Activated naive CD4-positive, alpha-beta T cell treated with anti-CD3 and anti-CD28 coated beads for 36 hours (primary cell): ENCODE measurements at regions of chr12 and their contacts with region 1.

Region 1: DNA sequence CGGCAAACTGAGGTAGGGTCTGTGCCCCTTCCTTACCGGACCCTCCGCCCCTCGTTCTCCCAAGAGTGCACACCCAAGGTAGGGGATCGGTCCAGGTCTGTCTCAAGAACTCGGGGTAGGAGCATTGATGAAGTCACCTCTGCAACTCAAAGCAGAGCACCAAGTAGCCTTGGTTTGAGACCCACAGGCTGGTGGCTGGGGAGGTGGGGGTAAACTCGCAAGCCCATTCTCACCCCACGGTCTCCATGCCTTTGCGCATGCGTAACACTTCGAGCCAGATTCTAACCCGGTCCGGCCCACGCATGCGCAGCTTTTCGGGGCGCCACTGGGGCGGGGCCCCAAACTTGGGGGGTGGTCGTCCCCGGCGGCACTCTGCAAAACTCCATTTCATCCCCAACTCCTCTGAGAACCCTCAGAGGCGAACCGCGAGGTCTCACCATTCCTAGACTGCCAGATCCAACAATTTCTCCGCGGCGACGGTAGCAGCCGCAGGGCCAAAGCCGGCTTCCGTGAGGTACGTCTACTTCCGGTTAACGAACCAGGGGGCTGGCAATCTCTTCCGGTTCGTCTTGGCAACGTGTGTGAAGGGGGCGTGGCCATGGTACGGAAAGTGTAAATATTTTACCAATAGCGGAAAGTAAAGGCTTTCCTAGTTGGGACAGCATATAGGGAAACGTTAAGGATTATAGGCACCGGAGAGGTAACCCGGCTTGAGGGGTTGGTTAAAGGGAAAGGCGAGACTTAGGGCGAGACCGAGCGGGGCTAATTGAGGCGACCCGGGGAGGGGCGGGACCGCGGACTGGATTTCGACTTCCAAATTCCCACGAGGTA is at the start of gene MCRS1:
- DNase-seq: peak; percentile 91
- H3K4me3 Mint-ChIP-seq: peak within 1 kb of the TSS; percentile 99
- H3K27ac Mint-ChIP-seq: peak within 1 kb of the TSS; percentile 98
- H3K4me1 Mint-ChIP-seq: peaks cover 50% of the 10 kb centered on the region
- H3K27me3 Mint-ChIP-seq: no peaks in the 10 kb centered on the region
- total RNA-seq, gene MCRS1: 49.8 to 52.7 TPM

Region 2: GRCh38 chr12:49553512-49554088 is 14.2 kb before region 1 on chr12:
- CTCF ChIA-PET with region 1: interaction called, 12 read pairs
- intact Hi-C with region 1: no loop called
- DNase-seq: peak; percentile 29
- H3K4me3 Mint-ChIP-seq: no peak overlapping the region
- H3K27ac Mint-ChIP-seq: no peak overlapping the region
- H3K4me1 Mint-ChIP-seq: peaks cover 4% of the 10 kb centered on the region
- H3K27me3 Mint-ChIP-seq: no peaks in the 10 kb centered on the region

Region 3: GRCh38 chr12:49580572-49581535 is 13.0 kb after region 1 on chr12:
- CTCF ChIA-PET with region 1: interaction called, 11 read pairs
- intact Hi-C with region 1: no loop called
- DNase-seq: peak; percentile 69
- H3K4me3 Mint-ChIP-seq: no peak overlapping the region
- H3K27ac Mint-ChIP-seq: no peak overlapping the region
- H3K4me1 Mint-ChIP-seq: peaks cover 16% of the 10 kb centered on the region
- H3K27me3 Mint-ChIP-seq: no peaks in the 10 kb centered on the region

Region 4: DNA sequence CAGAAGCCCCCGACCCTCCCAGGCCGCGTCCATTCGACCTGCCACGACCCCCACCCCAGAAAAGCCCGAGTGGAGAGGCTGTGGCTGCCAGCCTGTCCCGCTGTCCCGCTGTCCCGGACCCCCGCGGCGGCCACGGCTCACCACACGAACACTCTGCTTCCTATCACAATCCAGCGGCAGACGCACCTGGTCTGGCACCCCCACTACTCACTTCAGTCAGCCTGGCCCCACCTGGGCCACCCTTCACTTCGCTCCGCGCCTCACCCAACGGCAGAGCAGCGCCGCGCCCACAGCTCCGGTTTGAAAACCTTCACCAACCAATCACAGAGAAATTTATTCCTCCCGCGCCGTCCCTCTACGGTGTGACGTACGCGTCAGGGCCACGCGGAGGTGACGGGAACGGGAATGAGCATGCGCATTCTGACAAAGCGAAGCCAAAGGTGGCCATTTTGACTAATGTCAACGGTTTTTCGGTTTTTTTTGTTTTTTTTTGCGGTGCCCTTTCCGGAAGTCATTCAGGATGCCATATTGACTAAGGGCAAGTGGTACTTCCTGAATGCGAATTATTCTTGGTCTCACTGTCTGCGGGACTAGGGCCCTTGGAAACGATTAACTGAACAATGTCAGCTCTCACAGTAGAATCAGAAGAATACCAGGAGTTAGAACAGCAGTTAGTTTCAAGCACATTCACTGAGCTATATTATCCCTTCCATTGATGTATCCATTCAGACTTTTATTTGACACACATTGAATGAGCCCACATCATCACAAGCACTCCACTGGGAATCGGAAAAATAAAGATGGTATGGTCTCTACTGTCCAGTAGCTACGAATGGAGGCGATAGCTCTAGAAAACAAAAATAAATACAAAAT is 457.6 kb after region 1 on chr12 and contains the start of gene RACGAP1:
- CTCF ChIA-PET with region 1: no interaction called
- intact Hi-C with region 1: loop called (anchors 5 kb)
- DNase-seq: peak; percentile 98
- H3K4me3 Mint-ChIP-seq: peak within 1 kb of the TSS; percentile 92
- H3K27ac Mint-ChIP-seq: peak within 1 kb of the TSS; percentile 94
- H3K4me1 Mint-ChIP-seq: peaks cover 12% of the 10 kb centered on the region
- H3K27me3 Mint-ChIP-seq: no peaks in the 10 kb centered on the region
- total RNA-seq, gene RACGAP1: 156 to 159 TPM

Region 5: GRCh38 chr12:51505360-51506105 is 1937.7 kb after region 1 on chr12:
- CTCF ChIA-PET with region 1: no interaction called
- intact Hi-C with region 1: no loop called
- DNase-seq: no peak
- H3K4me3 Mint-ChIP-seq: no peak overlapping the region
- H3K27ac Mint-ChIP-seq: no peak overlapping the region
- H3K4me1 Mint-ChIP-seq: no peaks in the 10 kb centered on the region
- H3K27me3 Mint-ChIP-seq: no peaks in the 10 kb centered on the region